A673 (cell line): ENCODE measurements at regions of chr15 and their contacts with region 1.

Region 1: GRCh38 chr15:89358755-89359439 is 24.3 kb upstream of the POLG start:
- DNase-seq: peak; percentile 80
- H3K4me3 ChIP-seq: peak overlapping the region; percentile 47
- H3K27ac ChIP-seq: no peak overlapping the region
- H3K4me1 ChIP-seq: peaks cover 10% of the 10 kb centered on the region
- H3K27me3 ChIP-seq: peaks cover 67% of the 10 kb centered on the region
- CTCF ChIP-seq: peak; percentile 99

Region 2: DNA sequence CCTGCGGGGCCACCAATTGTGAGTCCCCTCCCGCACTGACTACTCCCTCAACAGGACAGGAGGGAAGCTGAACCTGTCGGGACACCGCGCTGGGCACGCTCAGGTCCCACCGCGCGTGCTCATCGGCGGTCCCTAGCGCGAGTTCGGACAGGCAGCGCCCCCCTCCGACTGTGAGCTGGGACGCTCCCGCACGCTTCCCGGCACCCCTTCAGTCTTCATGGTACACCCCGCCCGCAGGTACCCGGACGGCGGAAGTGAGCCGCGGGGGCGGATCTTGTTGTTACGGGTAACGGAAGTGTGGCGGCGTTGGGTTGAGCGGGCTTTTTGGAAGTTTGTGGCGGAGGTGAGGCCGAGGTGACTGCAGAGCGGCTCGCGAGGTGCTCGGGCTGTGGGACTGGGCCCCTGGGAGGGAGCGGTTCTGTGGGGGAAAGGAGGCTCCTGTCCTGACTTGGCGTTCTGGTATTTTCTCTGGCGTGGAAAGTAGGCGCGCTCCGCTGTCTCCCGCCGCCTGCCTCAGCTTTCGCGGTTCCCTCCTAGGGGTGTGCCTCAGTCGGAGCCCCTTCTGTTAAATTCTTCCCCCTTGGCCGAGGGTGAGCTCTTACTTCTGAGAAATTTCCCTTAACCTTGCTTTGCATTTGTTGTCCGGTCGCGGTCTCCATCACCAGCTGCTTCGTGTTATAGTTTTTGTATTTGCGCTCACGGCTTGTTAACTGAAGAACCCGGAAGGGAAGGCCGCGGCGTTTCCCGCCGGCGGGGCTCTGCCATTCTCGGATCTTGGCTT is 115.0 kb before region 1 on chr15 and contains the start of gene FANCI:
- CTCF ChIA-PET with region 1: interaction called, 10 read pairs
- POLR2A ChIA-PET with region 1: no interaction called
- intact Hi-C with region 1: no loop called
- DNase-seq: peak; percentile 98
- H3K4me3 ChIP-seq: peak within 1 kb of the TSS; percentile 73
- H3K27ac ChIP-seq: peak within 1 kb of the TSS; percentile 79
- H3K4me1 ChIP-seq: peaks cover 13% of the 10 kb centered on the region
- H3K27me3 ChIP-seq: no peaks in the 10 kb centered on the region
- CTCF ChIP-seq: peak; percentile 77
- total RNA-seq, gene FANCI: 163 and 175 TPM in 2 replicates

Region 3: GRCh38 chr15:89416141-89416853 is 57.4 kb after region 1 on chr15:
- CTCF ChIA-PET with region 1: interaction called, 11 read pairs
- POLR2A ChIA-PET with region 1: no interaction called
- intact Hi-C with region 1: loop called (anchors 5 kb)
- DNase-seq: peak; percentile 93
- H3K4me3 ChIP-seq: no peak overlapping the region
- H3K27ac ChIP-seq: no peak overlapping the region
- H3K4me1 ChIP-seq: no peaks in the 10 kb centered on the region
- H3K27me3 ChIP-seq: peaks cover 27% of the 10 kb centered on the region
- CTCF ChIP-seq: peak; percentile 100

Region 4: GRCh38 chr15:89430530-89431341 is 71.8 kb after region 1 on chr15:
- CTCF ChIA-PET with region 1: interaction called, 32 read pairs
- POLR2A ChIA-PET with region 1: no interaction called
- intact Hi-C with region 1: loop called (anchors 1 kb)
- DNase-seq: peak; percentile 85
- H3K4me3 ChIP-seq: peak overlapping the region; percentile 45
- H3K27ac ChIP-seq: no peak overlapping the region
- H3K4me1 ChIP-seq: peaks cover 12% of the 10 kb centered on the region
- H3K27me3 ChIP-seq: no peaks in the 10 kb centered on the region
- CTCF ChIP-seq: peak; percentile 96

Region 5: GRCh38 chr15:89472785-89473256 is 113.9 kb after region 1 on chr15:
- CTCF ChIA-PET with region 1: interaction called, 36 read pairs
- POLR2A ChIA-PET with region 1: no interaction called
- intact Hi-C with region 1: loop called (anchors 1 kb)
- DNase-seq: peak; percentile 79
- H3K4me3 ChIP-seq: no peak overlapping the region
- H3K27ac ChIP-seq: no peak overlapping the region
- H3K4me1 ChIP-seq: peaks cover 13% of the 10 kb centered on the region
- H3K27me3 ChIP-seq: no peaks in the 10 kb centered on the region
- CTCF ChIP-seq: peak; percentile 93